ENCODE measurements at regions of chr1 and their contacts with region 1.

Region 1: GRCh38 chr1:110495926-110496600 is 22.9 kb downstream of the KCNA10 start:
- DNase-seq: peak; percentile 88
- ATAC-seq: peak; percentile 87
- H3K4me3 Mint-ChIP-seq: no peak overlapping the region
- H3K27ac Mint-ChIP-seq: no peak overlapping the region
- H3K4me1 Mint-ChIP-seq: peaks cover 14% of the 10 kb centered on the region
- H3K27me3 Mint-ChIP-seq: no peaks in the 10 kb centered on the region

Region 2: GRCh38 chr1:110196917-110197765 is 298.9 kb before region 1 on chr1:
- CTCF ChIA-PET with region 1: interaction called, 86 read pairs
- POLR2A ChIA-PET with region 1: no interaction called
- DNase-seq: peak; percentile 66
- ATAC-seq: peak; percentile 87
- H3K4me3 Mint-ChIP-seq: no peak overlapping the region
- H3K27ac Mint-ChIP-seq: no peak overlapping the region
- H3K4me1 Mint-ChIP-seq: peaks cover 2% of the 10 kb centered on the region
- H3K27me3 Mint-ChIP-seq: no peaks in the 10 kb centered on the region

Region 3: GRCh38 chr1:110312188-110313121 is 183.6 kb before region 1 on chr1:
- CTCF ChIA-PET with region 1: interaction called, 18 read pairs
- POLR2A ChIA-PET with region 1: no interaction called
- DNase-seq: peak; percentile 76
- ATAC-seq: peak; percentile 97
- H3K4me3 Mint-ChIP-seq: no peak overlapping the region
- H3K27ac Mint-ChIP-seq: no peak overlapping the region
- H3K4me1 Mint-ChIP-seq: no peaks in the 10 kb centered on the region
- H3K27me3 Mint-ChIP-seq: no peaks in the 10 kb centered on the region

Region 4: GRCh38 chr1:110324667-110325066 is 171.4 kb before region 1 on chr1:
- CTCF ChIA-PET with region 1: no interaction called
- POLR2A ChIA-PET with region 1: no interaction called
- DNase-seq: no peak
- ATAC-seq: no peak
- H3K4me3 Mint-ChIP-seq: no peak overlapping the region
- H3K27ac Mint-ChIP-seq: no peak overlapping the region
- H3K4me1 Mint-ChIP-seq: no peaks in the 10 kb centered on the region
- H3K27me3 Mint-ChIP-seq: peaks cover 3% of the 10 kb centered on the region

Region 5: GRCh38 chr1:110418729-110419128 is 77.3 kb before region 1 on chr1:
- CTCF ChIA-PET with region 1: interaction called, 55 read pairs
- POLR2A ChIA-PET with region 1: no interaction called
- DNase-seq: no peak
- ATAC-seq: no peak
- H3K4me3 Mint-ChIP-seq: no peak overlapping the region
- H3K27ac Mint-ChIP-seq: peak overlapping the region; percentile 32
- H3K4me1 Mint-ChIP-seq: peaks cover 8% of the 10 kb centered on the region
- H3K27me3 Mint-ChIP-seq: peaks cover 5% of the 10 kb centered on the region

Region 6: DNA sequence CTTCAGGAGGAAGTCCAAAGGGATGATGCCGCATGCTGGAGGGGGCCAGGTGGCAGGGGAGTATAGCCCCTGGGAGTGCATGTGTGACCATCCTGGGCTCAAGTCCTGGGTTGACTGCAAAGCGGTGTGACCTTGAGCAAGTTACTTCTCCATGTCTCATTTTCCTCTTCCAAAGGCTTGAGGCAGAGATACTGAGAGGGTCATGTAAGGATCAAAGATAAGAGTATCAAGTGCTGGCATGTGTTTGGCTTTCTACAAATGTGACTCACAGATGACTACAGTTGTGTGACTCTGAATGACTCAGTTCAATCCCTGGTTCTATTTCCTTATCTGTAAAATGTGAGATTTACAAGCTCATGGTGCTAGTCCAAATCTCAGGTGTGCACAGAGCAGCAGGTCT is 19.0 kb before region 1 on chr1:
- CTCF ChIA-PET with region 1: interaction called, 37 read pairs
- POLR2A ChIA-PET with region 1: no interaction called
- DNase-seq: no peak
- ATAC-seq: no peak
- H3K4me3 Mint-ChIP-seq: no peak overlapping the region
- H3K27ac Mint-ChIP-seq: no peak overlapping the region
- H3K4me1 Mint-ChIP-seq: no peaks in the 10 kb centered on the region
- H3K27me3 Mint-ChIP-seq: peaks cover 11% of the 10 kb centered on the region

Region 7: GRCh38 chr1:110565565-110565964 is 69.5 kb after region 1 on chr1:
- CTCF ChIA-PET with region 1: interaction called, 10 read pairs
- POLR2A ChIA-PET with region 1: no interaction called
- DNase-seq: no peak
- ATAC-seq: no peak
- H3K4me3 Mint-ChIP-seq: no peak overlapping the region
- H3K27ac Mint-ChIP-seq: no peak overlapping the region
- H3K4me1 Mint-ChIP-seq: no peaks in the 10 kb centered on the region
- H3K27me3 Mint-ChIP-seq: peaks cover 23% of the 10 kb centered on the region

Region 8: DNA sequence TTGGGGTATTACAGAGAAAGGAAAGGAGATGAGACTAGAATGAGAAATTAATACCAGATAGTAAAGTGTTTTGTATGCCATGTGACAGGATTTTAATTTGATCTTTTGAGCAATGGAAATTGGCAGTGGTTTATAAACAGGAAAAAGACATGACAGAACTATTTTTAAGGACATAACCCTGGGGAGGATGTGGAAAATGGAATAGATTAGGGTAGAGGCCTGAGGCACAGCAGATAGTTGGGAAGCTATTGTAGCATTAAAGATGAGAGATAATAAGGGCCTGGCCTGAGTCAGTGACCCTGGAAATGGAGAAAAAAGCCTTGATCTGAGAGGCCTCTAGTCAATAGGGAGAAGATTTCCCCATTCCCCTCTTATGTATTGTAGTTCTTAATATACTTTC is 200.8 kb after region 1 on chr1:
- CTCF ChIA-PET with region 1: no interaction called
- POLR2A ChIA-PET with region 1: no interaction called
- DNase-seq: no peak
- ATAC-seq: no peak
- H3K4me3 Mint-ChIP-seq: no peak overlapping the region
- H3K27ac Mint-ChIP-seq: no peak overlapping the region
- H3K4me1 Mint-ChIP-seq: peaks cover 4% of the 10 kb centered on the region
- H3K27me3 Mint-ChIP-seq: peaks cover 7% of the 10 kb centered on the region